ENCODE measurements at regions of chr11 and their contacts with region 1.

Region 1: DNA sequence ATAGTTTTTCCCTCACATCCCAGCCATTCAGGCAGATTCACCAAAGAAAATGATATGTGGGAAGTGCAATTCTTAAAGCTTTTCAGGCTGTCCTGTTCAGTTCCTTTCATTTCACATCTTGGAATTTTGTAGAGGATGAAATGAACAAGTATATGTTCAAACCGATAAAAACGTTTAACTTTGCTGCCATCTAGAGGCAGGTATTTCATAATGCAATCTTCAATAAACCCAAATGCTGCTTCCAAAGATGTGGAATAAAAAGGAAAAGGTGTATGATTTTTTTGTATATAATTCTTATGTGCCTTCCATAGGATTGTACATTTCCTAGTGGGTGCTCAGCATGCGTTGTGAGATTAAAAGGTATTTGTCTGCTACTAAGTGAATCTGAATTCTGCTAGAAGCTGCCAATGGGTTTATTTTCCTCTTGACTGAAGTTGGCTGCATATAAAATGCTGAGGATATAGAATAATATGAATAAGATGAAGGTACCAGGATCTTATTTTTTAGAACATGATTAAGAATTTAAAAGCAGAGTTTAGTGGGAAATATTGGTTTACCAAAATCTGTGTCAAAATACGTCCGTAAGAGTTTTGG is 199.3 kb downstream of the PGR start:
- DNase-seq: peak; percentile 38
- H3K4me3 ChIP-seq: no peak overlapping the region
- H3K27ac ChIP-seq: no peak overlapping the region
- H3K4me1 ChIP-seq: no peaks in the 10 kb centered on the region
- CTCF ChIP-seq: peak; percentile 92

Region 2: GRCh38 chr11:100575870-100576705 is 354.2 kb before region 1 on chr11:
- CTCF ChIA-PET with region 1: no interaction called
- POLR2A ChIA-PET with region 1: no interaction called
- intact Hi-C with region 1: loop called (anchors 1 kb)
- DNase-seq: peak; percentile 44
- H3K4me3 ChIP-seq: no peak overlapping the region
- H3K27ac ChIP-seq: no peak overlapping the region
- H3K4me1 ChIP-seq: no peaks in the 10 kb centered on the region
- CTCF ChIP-seq: peak; percentile 90

Region 3: DNA sequence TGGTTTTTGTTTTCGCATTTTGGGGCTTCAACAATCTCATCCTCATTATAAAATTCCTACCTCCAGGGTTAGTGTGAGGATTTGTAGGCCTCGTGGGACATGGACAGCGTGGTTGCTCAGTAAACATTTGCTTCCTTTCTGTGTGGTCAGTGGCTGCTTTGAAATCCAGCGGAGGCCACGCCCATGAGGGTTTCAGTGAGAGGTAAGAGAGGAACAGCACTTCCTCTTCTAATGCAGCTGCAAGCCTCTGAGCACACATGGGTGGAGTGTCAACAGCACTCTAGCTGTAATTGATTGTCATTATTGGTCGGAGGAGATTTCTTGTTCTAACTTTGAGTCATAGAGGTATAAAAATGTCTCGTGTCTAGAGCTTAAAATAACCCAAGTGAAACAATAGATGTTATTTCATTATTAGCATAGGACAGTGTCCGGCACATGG is 249.2 kb before region 1 on chr11:
- CTCF ChIA-PET with region 1: no interaction called
- POLR2A ChIA-PET with region 1: interaction called, 3 read pairs
- intact Hi-C with region 1: loop called (anchors 1 kb)
- DNase-seq: peak; percentile 56
- H3K4me3 ChIP-seq: no peak overlapping the region
- H3K27ac ChIP-seq: no peak overlapping the region
- H3K4me1 ChIP-seq: no peaks in the 10 kb centered on the region
- CTCF ChIP-seq: no peak

Region 4: GRCh38 chr11:100855466-100856067 is 74.7 kb before region 1 on chr11:
- CTCF ChIA-PET with region 1: no interaction called
- POLR2A ChIA-PET with region 1: interaction called, 4 read pairs
- intact Hi-C with region 1: loop called (anchors 2 kb)
- DNase-seq: peak; percentile 39
- H3K4me3 ChIP-seq: no peak overlapping the region
- H3K27ac ChIP-seq: no peak overlapping the region
- H3K4me1 ChIP-seq: no peaks in the 10 kb centered on the region
- CTCF ChIP-seq: peak; percentile 79

Region 5: GRCh38 chr11:100908746-100909145 is 21.5 kb before region 1 on chr11:
- CTCF ChIA-PET with region 1: no interaction called
- POLR2A ChIA-PET with region 1: interaction called, 17 read pairs
- intact Hi-C with region 1: no loop called
- DNase-seq: no peak
- H3K4me3 ChIP-seq: no peak overlapping the region
- H3K27ac ChIP-seq: no peak overlapping the region
- H3K4me1 ChIP-seq: peaks cover 35% of the 10 kb centered on the region
- CTCF ChIP-seq: no peak

Region 6: DNA sequence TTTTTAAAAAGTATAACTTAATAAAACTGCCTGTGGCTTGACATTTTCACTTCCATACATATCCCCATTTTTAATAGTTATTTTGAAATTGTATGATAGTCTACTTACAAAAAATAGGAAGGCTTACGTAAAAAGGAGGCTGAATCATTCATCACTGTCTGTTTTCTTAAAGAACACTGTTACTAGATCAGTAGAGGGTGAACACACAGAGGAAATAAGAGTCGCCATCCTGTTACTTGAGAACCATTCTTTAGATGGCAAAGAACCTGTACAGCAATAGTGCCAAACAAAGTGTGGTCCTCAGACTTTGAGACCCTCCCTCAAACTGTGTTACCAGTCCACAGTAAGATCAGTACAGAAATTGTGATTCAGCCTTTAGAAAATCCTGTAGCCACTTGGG is 18.7 kb after region 1 on chr11:
- CTCF ChIA-PET with region 1: no interaction called
- POLR2A ChIA-PET with region 1: no interaction called
- intact Hi-C with region 1: no loop called
- DNase-seq: no peak
- H3K4me3 ChIP-seq: no peak overlapping the region
- H3K27ac ChIP-seq: no peak overlapping the region
- H3K4me1 ChIP-seq: no peaks in the 10 kb centered on the region
- CTCF ChIP-seq: no peak

Region 7: GRCh38 chr11:100980156-100980555 is 49.9 kb after region 1 on chr11:
- CTCF ChIA-PET with region 1: no interaction called
- POLR2A ChIA-PET with region 1: no interaction called
- intact Hi-C with region 1: no loop called
- DNase-seq: peak; percentile 5
- H3K4me3 ChIP-seq: no peak overlapping the region
- H3K27ac ChIP-seq: no peak overlapping the region
- H3K4me1 ChIP-seq: peaks cover 5% of the 10 kb centered on the region
- CTCF ChIP-seq: peak; percentile 56